ENCODE measurements at regions of chr18 and their contacts with region 1.

Region 1: GRCh38 chr18:27298214-27298804 is 113.2 kb upstream of the CHST9 start:
- DNase-seq: no peak
- ATAC-seq: no peak
- H3K4me3 ChIP-seq: no peak overlapping the region
- H3K27ac ChIP-seq: no peak overlapping the region
- H3K4me1 ChIP-seq: no peaks in the 10 kb centered on the region
- H3K27me3 ChIP-seq: no peaks in the 10 kb centered on the region
- CTCF ChIP-seq: peak; percentile 20; the same call in 1 of the 2 replicates

Region 2: DNA sequence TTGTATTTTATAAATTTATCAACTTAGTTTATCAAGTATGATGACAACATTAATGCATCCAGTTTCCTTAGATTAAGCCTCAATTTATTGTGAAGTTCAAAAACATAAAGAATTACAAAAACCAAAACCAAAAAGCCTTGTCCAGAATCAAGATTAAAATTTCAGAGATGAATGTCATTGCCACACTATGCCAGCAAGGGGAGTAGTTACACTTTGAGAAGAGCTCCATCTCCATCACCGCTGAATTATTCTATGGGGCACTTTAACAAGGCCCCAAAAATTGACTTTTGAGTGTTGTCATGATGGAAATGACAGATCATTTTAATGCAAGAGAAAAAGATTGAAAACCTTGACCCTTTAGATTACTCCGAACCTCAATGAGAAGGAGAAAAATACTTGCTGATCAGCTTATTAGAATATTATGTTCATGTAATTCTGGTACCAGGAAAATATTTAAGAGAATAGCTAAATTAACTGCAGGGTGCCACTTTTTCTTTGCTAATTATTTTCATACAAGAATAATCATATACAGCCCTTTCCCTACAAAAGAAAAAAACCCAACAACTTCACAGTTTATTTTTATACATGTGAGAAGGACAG is 280.3 kb before region 1 on chr18:
- CTCF ChIA-PET with region 1: no interaction called
- POLR2A ChIA-PET with region 1: no interaction called
- in situ Hi-C with region 1: no loop called
- intact Hi-C with region 1: loop called (anchors 5 kb)
- DNase-seq: no peak
- ATAC-seq: peak; percentile 78; the same call in 1 of the 2 replicates
- H3K4me3 ChIP-seq: no peak overlapping the region
- H3K27ac ChIP-seq: no peak overlapping the region
- H3K4me1 ChIP-seq: no peaks in the 10 kb centered on the region
- H3K27me3 ChIP-seq: no peaks in the 10 kb centered on the region; the same call in 1 of the 2 replicates
- CTCF ChIP-seq: peak; percentile 71; the same call in 1 of the 2 replicates